ENCODE measurements at regions of chr14 and their contacts with region 1.

Region 1: DNA sequence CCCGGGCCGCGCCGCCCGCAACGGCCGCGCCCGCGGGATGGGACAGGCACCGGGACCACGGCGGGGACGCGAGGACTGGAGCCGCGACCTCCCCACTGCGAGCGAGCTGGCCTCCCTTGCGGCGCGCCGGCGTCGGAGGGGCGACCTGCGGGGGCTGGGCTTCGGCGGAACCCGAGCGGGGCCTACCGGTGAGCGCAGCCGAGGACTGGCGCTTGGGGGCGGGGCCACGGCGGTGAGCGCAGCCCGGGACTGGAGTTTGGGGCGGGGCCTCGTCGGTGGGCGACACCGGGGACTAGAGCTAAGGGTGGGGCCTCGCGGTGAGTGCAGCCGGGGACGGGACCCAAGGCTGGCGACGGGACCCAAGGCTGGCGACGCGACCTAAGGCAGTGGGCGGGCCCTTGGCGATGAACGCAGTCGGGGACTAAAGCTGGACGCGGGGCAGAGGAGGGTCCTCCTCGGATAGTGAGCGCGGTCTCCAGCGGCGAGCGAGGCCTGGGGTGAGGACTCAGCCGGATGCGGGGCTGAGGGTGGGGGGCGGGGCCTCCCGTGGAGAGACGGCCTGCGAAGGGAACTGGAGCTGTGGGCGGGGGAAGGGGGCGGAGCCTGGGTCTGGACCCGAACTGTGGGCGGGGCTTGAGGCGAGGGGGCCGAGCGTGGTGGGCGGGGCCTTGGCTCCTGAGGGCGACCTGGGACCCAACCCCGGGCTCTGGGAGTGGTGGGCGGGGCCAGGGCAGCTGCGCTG is at the start of gene BRF1:
- DNase-seq: peak; percentile 98 to 100
- ATAC-seq: peak; percentile 97
- H3K4me3 ChIP-seq: peak within 1 kb of the TSS; percentile 52 to 76
- H3K27ac ChIP-seq: peak within 1 kb of the TSS in 1 of 2 donors; percentile 83
- H3K4me1 ChIP-seq: no peaks in the 10 kb centered on the region
- H3K27me3 ChIP-seq: no peaks in the 10 kb centered on the region
- total RNA-seq, gene BRF1: 25.2 to 44.3 TPM

Region 2: DNA sequence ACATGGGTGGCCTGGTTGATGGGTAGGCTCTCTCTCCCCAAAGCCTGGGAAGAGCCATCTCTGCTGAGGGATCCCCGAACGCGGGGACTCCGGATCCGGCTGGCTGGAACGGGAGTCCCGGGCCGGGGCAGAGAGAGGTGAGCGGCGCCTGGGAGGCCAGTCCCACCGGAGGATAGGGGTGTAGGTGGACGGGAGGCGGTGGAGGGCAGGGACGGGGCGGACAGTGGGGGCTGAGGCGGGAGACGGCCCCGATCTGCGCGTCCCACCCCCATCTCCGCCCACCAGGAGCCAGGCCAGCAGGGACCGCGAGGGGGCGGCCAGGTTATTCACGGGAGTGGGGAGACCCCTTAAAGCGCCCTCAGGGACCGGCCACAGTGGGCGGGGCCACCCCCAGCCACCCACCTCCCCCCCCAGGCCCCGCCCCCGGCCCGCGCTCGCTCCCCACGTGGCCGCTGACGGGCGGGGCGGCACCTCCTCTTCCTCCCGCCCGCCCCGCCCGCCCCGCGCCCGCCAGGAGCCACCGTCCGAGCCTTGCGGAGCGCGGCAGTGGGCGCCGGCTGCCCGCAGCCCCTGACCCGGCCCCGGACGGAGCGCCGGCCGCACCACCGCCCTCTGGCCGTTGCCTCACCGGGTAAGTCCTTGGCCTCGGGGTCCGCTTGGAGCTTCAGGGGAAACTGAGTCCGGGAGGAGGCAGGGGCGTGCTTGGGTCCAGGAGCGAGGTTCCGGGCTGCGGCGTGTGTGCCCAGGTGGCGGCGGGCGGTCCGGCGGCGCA is 611.7 kb before region 1 on chr14 and contains the start of gene INF2:
- intact Hi-C with region 1: loop called in 1 of 2 experiments (anchors 5 kb)
- DNase-seq: no peak
- ATAC-seq: peak; percentile 72
- H3K4me3 ChIP-seq: peak within 1 kb of the TSS; percentile 60 to 88
- H3K27ac ChIP-seq: peak within 1 kb of the TSS in 1 of 2 donors; percentile 43
- H3K4me1 ChIP-seq: no peaks in the 10 kb centered on the region
- H3K27me3 ChIP-seq: no peaks in the 10 kb centered on the region
- total RNA-seq, gene INF2: 84.9 to 102 TPM

Region 3: DNA sequence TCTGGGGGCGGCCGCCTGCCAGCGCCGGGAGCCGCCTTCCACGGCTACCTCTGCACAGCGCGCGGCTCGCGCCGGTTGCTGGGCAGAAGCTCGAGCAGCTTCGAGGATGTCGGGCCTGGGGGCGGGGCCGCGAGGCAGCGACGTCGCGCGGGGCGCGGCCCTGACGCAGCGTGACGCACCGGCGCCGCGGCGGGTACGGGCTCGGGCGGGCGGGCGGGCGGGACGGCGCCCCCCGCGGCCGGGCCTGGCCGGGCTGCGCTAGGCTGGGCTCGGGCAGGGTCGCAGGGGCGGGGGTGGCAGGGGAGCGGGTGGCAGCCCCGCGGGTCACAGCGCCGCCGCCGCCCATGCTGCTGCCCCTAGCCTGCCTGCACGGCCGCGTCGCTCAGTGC is 52.6 kb before region 1 on chr14 and contains the start of gene BTBD6:
- intact Hi-C with region 1: loop called in 1 of 2 experiments (anchors 10 kb)
- DNase-seq: peak; percentile 92 to 95
- ATAC-seq: peak; percentile 93
- H3K4me3 ChIP-seq: peak within 1 kb of the TSS; percentile 70 to 83
- H3K27ac ChIP-seq: peak within 1 kb of the TSS in 1 of 2 donors; percentile 89
- H3K4me1 ChIP-seq: no peaks in the 10 kb centered on the region
- H3K27me3 ChIP-seq: no peaks in the 10 kb centered on the region
- total RNA-seq, gene BTBD6: 39.1 to 40.4 TPM

Region 4: DNA sequence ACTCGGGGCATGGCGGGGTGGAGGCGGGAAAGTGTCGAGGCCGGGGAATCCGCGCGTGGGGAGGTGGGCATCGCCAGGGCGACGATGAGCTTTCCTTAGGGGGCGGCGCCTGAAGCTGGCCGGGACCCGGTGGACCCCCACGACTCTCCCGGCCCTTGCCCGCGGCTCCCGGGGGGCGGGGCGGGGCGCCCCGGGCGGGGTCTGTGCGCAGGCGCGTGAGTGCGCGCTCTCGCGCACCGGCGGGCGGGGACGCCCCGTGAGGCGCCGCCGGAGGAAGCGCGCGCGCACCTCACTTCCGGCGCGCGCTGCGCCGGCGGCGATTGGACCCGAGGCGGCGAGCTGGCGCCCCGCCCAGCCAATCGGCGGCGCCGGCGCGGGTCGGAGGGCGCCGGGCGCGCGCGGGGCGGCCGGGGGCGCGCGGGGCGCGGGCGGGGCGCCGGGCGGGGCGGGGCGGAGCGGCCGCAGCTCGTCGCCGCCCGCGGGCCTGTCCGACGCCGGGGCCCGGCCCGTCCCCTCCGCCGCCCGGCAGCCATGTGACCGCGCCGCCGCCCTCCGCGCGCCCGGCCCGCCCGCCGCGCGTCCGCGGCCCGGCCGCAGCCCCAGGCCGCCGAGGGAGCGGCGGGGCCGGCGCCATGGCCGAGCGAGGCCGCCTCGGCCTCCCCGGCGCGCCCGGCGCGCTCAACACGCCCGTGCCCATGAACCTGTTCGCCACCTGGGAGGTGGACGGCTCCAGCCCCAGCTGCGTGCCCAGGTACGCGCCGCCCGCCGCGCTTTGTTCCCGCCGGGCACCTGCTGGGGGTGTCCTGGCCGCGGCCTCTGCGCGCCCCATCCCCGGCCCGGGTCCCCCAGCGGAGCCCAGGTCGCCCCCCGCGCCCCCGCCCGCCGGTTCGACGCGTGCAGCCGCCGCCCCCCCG is 13.6 kb after region 1 on chr14 and contains the start of gene PACS2:
- intact Hi-C with region 1: loop called in 1 of 2 experiments (anchors 2 kb)
- DNase-seq: peak; percentile 79 to 91
- ATAC-seq: peak; percentile 87
- H3K4me3 ChIP-seq: peak within 1 kb of the TSS; percentile 80 to 91
- H3K27ac ChIP-seq: peak within 1 kb of the TSS; percentile 3 to 63
- H3K4me1 ChIP-seq: no peaks in the 10 kb centered on the region
- H3K27me3 ChIP-seq: no peaks in the 10 kb centered on the region
- total RNA-seq, gene PACS2: 71.3 to 98.5 TPM

Measured in aorta (tissue), 5 donors.